ENCODE measurements at regions of chr6 and their contacts with region 1.

Region 1: DNA sequence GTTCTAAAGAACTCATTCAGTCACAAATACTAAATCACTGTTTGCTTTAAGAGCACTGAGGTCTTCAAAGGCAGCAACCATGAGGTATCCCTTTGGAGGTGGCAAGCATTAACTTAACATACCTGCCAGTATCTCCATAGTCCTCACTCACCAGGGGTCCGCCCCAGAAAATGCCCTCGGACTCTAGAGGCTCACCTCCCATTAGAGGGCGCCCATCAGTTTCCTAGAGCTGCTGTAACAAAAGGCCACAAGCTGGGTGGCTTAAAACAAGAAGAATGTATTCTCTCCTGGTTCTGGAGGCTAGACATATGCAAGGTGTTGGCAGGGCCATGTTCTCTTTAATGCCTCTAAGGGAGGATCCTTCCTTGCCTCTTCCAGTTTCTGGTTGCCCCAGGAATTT is 12.0 kb upstream of the RNGTT start:
- DNase-seq: no peak
- H3K4me3 ChIP-seq: no peak overlapping the region
- H3K27ac ChIP-seq: no peak overlapping the region
- H3K4me1 ChIP-seq: no peaks in the 10 kb centered on the region
- H3K27me3 ChIP-seq: no peaks in the 10 kb centered on the region
- CTCF ChIP-seq: no peak
- POLR2A ChIP-seq: no peak

Region 2: DNA sequence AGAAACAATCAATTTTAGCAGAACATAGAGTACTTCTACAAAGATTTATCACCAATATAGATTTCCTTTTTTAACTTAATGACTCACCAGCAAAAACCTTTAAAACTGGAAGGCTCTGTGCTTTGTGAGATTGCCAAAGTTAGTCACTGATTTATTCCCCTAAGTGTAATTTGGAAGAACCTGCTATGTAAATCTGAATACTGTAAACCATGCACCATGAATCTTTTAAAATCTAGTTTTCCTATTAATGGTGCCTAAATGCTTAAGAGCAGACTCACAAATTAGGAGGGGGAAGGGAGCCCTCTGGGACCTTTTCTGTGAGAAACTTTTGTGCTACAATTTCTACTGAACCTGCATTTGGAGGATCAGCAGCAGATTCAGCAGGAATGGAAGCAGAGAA is 47.4 kb after region 1 on chr6:
- intact Hi-C with region 1: no loop called
- DNase-seq: no peak
- H3K4me3 ChIP-seq: no peak overlapping the region
- H3K27ac ChIP-seq: peak overlapping the region in 1 of 2 donors; percentile 76
- H3K4me1 ChIP-seq: peaks cover 0 to 6% of the 10 kb centered on the region in 2 donors
- H3K27me3 ChIP-seq: no peaks in the 10 kb centered on the region
- CTCF ChIP-seq: no peak
- POLR2A ChIP-seq: no peak

Region 3: DNA sequence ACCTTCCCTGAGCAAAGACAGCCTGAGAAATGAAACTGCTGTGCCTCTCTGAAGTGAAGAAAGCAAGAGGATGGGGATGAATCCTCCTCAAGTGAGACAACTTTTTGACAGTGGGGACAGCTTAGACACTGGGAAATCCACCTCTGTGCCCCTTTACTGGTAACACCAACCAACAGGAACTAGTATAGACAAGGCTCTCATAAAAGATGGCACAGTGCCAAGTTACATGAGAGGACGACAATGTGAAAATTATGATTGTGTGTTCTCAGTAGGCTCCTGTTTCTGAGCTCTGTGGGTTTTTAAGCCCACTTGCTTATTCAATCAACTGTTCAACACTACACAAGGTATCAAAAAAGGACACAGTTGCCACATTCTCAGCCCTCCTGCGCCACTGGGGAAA is 704.8 kb after region 1 on chr6:
- intact Hi-C with region 1: loop called (anchors 5 kb)
- DNase-seq: no peak
- H3K4me3 ChIP-seq: no peak overlapping the region
- H3K27ac ChIP-seq: no peak overlapping the region
- H3K4me1 ChIP-seq: no peaks in the 10 kb centered on the region
- H3K27me3 ChIP-seq: no peaks in the 10 kb centered on the region
- CTCF ChIP-seq: no peak
- POLR2A ChIP-seq: no peak